ENCODE measurements at regions of chrX and their contacts with region 1.

Region 1: DNA sequence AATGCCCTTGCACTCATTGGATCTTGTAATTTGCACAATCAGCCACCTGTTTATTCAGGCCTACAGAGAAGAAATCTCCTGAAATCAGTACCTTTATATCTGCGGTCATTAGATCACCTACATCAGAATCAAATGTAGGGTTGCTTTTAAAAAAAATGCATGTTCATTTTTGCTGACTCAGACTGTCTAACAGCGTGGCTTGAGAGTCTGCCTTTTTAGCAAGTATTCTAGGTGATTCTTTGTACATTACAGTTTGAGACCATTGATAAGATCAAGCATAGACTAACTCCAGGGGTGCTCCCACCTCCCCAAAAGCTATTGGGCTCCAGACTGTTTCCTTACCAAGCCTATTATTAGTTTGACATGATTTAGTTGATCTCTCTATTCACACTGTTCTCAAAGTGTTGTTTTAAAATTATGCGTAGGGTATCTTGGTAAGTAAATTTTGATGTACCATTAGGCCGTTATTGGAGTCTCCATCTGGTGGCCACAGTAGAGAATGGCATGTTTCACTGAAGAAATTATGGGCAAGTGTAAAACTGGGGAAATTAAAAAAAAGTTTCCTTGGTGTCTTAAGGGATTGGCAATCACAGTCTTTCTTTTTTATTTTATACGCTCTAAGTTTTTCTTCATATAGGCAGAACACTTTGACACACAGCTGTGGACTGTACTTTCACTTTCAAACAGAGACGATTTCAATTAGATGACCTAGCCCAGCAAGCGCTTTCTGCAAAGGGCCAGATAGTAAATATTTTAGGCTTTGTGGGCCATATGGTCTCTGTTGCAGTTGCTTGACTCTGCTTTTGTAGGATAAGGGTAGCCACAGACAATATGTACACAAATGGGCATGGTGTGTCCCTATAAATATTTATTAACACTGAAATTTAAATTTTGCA is 33.7 kb upstream of the MSL3 start:
- DNase-seq: peak; percentile 17
- ATAC-seq: peak; percentile 56
- H3K4me3 Mint-ChIP-seq: no peak overlapping the region
- H3K27ac Mint-ChIP-seq: no peak overlapping the region
- H3K4me1 Mint-ChIP-seq: no peaks in the 10 kb centered on the region
- H3K27me3 Mint-ChIP-seq: no peaks in the 10 kb centered on the region
- CTCF ChIP-seq: peak; percentile 54

Region 2: GRCh38 chrX:11770320-11770719 is 46.0 kb after region 1 on chrX:
- CTCF ChIA-PET with region 1: interaction called, 3 read pairs
- POLR2A ChIA-PET with region 1: no interaction called
- intact Hi-C with region 1: loop called (anchors 5 kb)
- DNase-seq: peak; percentile 69
- ATAC-seq: peak; percentile 79
- H3K4me3 Mint-ChIP-seq: peak overlapping the region; percentile 29
- H3K27ac Mint-ChIP-seq: peak overlapping the region; percentile 93
- H3K4me1 Mint-ChIP-seq: peaks cover 50% of the 10 kb centered on the region
- H3K27me3 Mint-ChIP-seq: no peaks in the 10 kb centered on the region
- CTCF ChIP-seq: peak; percentile 58